Left ventricle myocardium inferior (tissue), 1 donor: ENCODE measurements at regions of chr3 and their contacts with region 1.

Region 1: GRCh38 chr3:45499529-45499928 is 95.0 kb upstream of the LIMD1 start:
- DNase-seq: no peak
- H3K4me3 ChIP-seq: no peak overlapping the region
- H3K27ac ChIP-seq: no peak overlapping the region
- H3K4me1 ChIP-seq: no peaks in the 10 kb centered on the region
- H3K27me3 ChIP-seq: no peaks in the 10 kb centered on the region
- CTCF ChIP-seq: peak; percentile 56

Region 2: GRCh38 chr3:45224824-45225464 is 274.6 kb before region 1 on chr3:
- intact Hi-C with region 1: loop called (anchors 10 kb)
- DNase-seq: peak; percentile 69
- H3K4me3 ChIP-seq: peak overlapping the region; percentile 69
- H3K27ac ChIP-seq: no peak overlapping the region
- H3K4me1 ChIP-seq: peaks cover 15% of the 10 kb centered on the region
- H3K27me3 ChIP-seq: peaks cover 87% of the 10 kb centered on the region
- CTCF ChIP-seq: peak; percentile 64